ENCODE measurements at regions of chr7 and their contacts with region 1.

Region 1: DNA sequence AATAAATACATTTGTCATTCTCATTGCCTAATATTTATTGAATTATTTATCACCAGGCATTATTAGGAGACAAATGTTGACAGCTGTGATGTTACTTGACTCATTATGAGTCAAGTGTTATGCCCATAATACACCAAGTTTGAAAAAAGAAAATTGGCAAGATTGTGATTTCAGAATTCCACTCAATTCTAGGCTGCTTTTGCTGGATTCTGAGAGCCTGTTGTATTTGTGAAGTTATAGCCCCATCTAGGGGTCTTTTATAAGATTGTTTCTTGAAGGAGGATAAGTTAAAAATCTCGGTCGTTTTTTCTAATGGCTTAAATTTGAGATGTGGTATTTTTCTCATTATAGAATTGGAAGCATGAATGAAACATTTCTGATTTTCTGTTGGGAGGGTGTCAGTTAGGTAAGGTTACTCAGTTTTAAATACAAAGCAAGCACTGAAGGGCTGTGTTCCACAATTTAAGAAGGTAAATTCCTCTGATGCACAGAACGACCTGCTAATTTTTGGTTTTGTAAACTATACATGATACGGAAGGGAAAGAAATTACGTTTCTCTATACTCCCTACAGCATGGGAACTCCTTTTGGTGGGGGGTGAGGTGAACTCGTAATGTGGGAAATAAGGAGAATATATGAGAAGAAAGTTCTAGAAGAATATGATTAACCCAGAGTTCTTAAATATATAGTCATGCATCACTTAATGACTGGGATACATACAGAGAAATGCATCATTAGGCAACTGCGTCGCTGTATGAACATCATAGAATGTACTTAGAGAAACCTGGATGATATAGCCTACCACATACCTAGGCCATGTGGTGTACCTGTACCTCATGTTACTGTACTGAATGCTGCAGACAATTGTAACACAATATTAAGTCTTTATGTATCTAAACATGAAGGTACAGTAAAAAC is 2.6 kb downstream of the STK31 start:
- DNase-seq: no peak
- H3K4me3 Mint-ChIP-seq: no peak overlapping the region
- H3K27ac Mint-ChIP-seq: no peak overlapping the region
- H3K4me1 Mint-ChIP-seq: no peaks in the 10 kb centered on the region
- H3K27me3 Mint-ChIP-seq: peaks cover 4% of the 10 kb centered on the region

Region 2: GRCh38 chr7:23546897-23547572 is 165.6 kb before region 1 on chr7:
- CTCF ChIA-PET with region 1: interaction called, 17 read pairs
- DNase-seq: peak; percentile 84
- H3K4me3 Mint-ChIP-seq: no peak overlapping the region
- H3K27ac Mint-ChIP-seq: no peak overlapping the region
- H3K4me1 Mint-ChIP-seq: peaks cover 9% of the 10 kb centered on the region
- H3K27me3 Mint-ChIP-seq: peaks cover 8% of the 10 kb centered on the region

Region 3: DNA sequence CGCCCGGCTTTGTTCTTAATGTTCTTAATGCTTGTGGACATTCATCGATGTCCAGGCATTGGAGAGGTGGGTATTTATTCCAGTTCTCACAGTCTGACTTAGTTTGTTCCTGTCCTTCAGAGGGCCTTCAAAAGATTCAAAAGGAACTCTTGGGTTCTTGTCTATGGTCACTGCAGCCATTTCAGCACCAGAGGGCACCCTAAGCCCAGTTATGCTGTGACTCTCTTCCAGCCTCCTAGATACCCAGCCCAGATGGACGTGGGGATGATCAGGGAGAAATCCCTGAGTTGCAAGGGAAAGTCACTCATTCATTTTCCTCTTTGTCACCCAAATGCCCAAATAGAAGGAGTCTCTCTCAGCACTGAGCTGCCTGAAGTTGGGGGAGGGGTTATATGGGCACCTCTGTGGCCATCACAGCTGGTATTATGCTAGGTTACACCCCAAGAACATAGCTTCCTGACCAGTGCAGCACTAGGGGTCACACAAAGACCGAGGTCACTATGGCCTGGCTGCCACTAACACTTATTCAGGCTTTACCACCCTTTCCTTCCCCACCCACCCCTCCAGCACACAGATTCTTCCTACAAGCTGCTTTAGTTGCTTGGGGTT is 141.9 kb before region 1 on chr7:
- CTCF ChIA-PET with region 1: interaction called, 18 read pairs
- DNase-seq: peak; percentile 79
- H3K4me3 Mint-ChIP-seq: no peak overlapping the region
- H3K27ac Mint-ChIP-seq: no peak overlapping the region
- H3K4me1 Mint-ChIP-seq: no peaks in the 10 kb centered on the region
- H3K27me3 Mint-ChIP-seq: peaks cover 7% of the 10 kb centered on the region

Region 4: GRCh38 chr7:23751852-23752251 is 39.2 kb after region 1 on chr7:
- CTCF ChIA-PET with region 1: no interaction called
- DNase-seq: no peak
- H3K4me3 Mint-ChIP-seq: no peak overlapping the region
- H3K27ac Mint-ChIP-seq: no peak overlapping the region
- H3K4me1 Mint-ChIP-seq: no peaks in the 10 kb centered on the region
- H3K27me3 Mint-ChIP-seq: no peaks in the 10 kb centered on the region